Naive thymus-derived CD4-positive, alpha-beta T cell (primary cell): ENCODE measurements at regions of chr14 and their contacts with region 1.

Region 1: DNA sequence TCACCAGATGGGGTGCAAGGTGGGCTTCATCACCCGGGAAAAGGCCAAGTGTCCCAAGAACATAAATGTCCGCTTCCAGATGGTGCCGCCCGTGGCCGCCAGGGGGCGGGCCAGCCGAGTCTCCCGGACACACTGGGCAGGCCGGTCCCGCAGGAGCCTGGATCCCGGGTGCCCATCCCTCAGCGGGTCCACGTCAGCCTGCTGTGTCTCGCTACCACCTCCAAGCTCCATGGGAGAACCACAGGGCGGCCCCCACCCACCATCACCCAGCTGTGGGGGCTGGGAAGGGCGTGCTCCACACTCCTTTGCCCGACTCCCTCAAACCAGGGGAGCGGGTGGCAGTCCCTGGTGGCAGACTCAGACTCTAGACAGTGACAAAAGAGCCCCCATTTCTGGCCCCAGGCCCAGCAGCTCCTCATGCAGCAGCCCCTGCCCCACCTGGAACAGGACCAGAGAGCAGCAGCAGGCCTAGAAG is 22.0 kb upstream of the NUDT14 start:
- DNase-seq: peak in 6 of 9 donors; percentile 30 to 75 (median 58)
- ATAC-seq: peak; percentile 58
- H3K4me3 ChIP-seq: no peak overlapping the region
- H3K4me3 Mint-ChIP-seq: no peak overlapping the region
- H3K27ac ChIP-seq: no peak overlapping the region
- H3K27ac Mint-ChIP-seq: no peak overlapping the region
- H3K4me1 ChIP-seq: peaks cover 0 to 18% of the 10 kb centered on the region in 2 donors
- H3K4me1 Mint-ChIP-seq: peaks cover 9 to 15% (median 13%) of the 10 kb centered on the region in 7 donors
- H3K27me3 ChIP-seq: peaks cover 0 to 2% of the 10 kb centered on the region in 2 donors
- H3K27me3 Mint-ChIP-seq: peaks cover 6 to 26% (median 12%) of the 10 kb centered on the region in 5 donors

Region 2: DNA sequence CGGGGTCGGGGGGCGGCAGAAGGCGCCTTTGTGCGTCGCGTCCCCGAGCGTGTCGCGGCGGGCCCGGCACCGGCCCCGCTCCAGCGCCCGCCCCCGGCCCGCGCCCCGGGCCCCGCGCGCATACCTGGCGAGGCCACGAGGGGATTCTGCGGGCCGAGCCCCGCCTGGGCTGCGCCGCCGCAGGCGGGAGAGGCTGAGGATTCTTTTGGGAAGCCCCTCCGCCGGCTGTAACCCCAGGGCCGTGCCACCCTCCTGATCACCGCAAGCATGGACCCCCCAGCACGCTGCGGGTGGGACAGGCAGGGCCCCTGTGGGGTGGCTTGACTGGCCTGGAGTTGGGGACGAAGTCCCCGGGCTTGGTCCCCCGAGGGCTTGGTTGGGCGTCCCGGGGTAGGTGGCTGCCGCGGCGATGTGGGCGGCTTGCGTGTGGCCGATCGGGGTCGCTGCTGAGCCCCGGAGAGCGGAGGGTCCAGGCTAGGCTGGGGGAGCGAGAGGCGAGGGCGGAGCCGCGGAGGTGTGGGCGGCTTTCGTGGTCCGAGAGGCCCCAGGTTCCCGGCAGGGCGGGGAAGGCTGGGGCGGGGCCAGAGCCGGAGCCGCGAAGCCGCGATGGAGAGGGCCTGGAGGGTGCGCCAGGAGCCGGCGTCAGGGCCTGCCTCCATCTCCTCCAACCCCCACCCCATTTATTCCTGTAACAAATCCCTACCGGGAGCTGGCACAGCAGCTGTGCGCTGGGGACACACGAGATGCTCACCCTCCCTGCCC is 109.5 kb before region 1 on chr14:
- CTCF ChIA-PET with region 1: no interaction called
- POLR2A ChIA-PET with region 1: no interaction called
- intact Hi-C with region 1: loop called (anchors 2 to 5 kb)
- DNase-seq: peak in 7 of 9 donors; percentile 23 to 84 (median 31)
- ATAC-seq: peak; percentile 47
- H3K4me3 ChIP-seq: peak overlapping the region; percentile 67
- H3K4me3 Mint-ChIP-seq: peak overlapping the region; percentile 46 to 84 (median 72)
- H3K27ac ChIP-seq: peak overlapping the region; percentile 87
- H3K27ac Mint-ChIP-seq: peak overlapping the region in 6 of 9 donors; percentile 41 to 72 (median 60)
- H3K4me1 ChIP-seq: peaks cover 14 to 15% of the 10 kb centered on the region in 2 donors
- H3K4me1 Mint-ChIP-seq: peaks cover 5 to 22% (median 16%) of the 10 kb centered on the region in 7 donors
- H3K27me3 ChIP-seq: no peaks in the 10 kb centered on the region
- H3K27me3 Mint-ChIP-seq: peaks cover 0 to 4% (median 0%) of the 10 kb centered on the region in 5 donors

Region 3: GRCh38 chr14:105161964-105162668 is 41.0 kb before region 1 on chr14:
- CTCF ChIA-PET with region 1: no interaction called
- POLR2A ChIA-PET with region 1: no interaction called
- intact Hi-C with region 1: no loop called
- DNase-seq: no peak
- ATAC-seq: peak; percentile 57
- H3K4me3 ChIP-seq: no peak overlapping the region
- H3K4me3 Mint-ChIP-seq: no peak overlapping the region
- H3K27ac ChIP-seq: no peak overlapping the region
- H3K27ac Mint-ChIP-seq: no peak overlapping the region
- H3K4me1 ChIP-seq: no peaks in the 10 kb centered on the region
- H3K4me1 Mint-ChIP-seq: peaks cover 0 to 3% (median 0%) of the 10 kb centered on the region in 7 donors
- H3K27me3 ChIP-seq: no peaks in the 10 kb centered on the region
- H3K27me3 Mint-ChIP-seq: peaks cover 0 to 8% (median 3%) of the 10 kb centered on the region in 5 donors

Region 4: GRCh38 chr14:105223260-105223659 is 20.2 kb after region 1 on chr14:
- CTCF ChIA-PET with region 1: no interaction called
- POLR2A ChIA-PET with region 1: no interaction called
- intact Hi-C with region 1: no loop called
- DNase-seq: no peak
- ATAC-seq: no peak
- H3K4me3 ChIP-seq: no peak overlapping the region
- H3K4me3 Mint-ChIP-seq: no peak overlapping the region
- H3K27ac ChIP-seq: no peak overlapping the region
- H3K27ac Mint-ChIP-seq: peak overlapping the region in 1 of 9 donors; percentile 41
- H3K4me1 ChIP-seq: no peaks in the 10 kb centered on the region
- H3K4me1 Mint-ChIP-seq: peaks cover 0 to 4% (median 0%) of the 10 kb centered on the region in 7 donors
- H3K27me3 ChIP-seq: no peaks in the 10 kb centered on the region
- H3K27me3 Mint-ChIP-seq: no peaks in the 10 kb centered on the region

Region 5: GRCh38 chr14:105248368-105248756 is 45.3 kb after region 1 on chr14 and contains the start of gene BTBD6:
- CTCF ChIA-PET with region 1: no interaction called
- POLR2A ChIA-PET with region 1: no interaction called
- intact Hi-C with region 1: loop called in 1 of 2 experiments (anchors 1 kb)
- DNase-seq: peak; percentile 83 to 91 (median 88)
- ATAC-seq: peak; percentile 94
- H3K4me3 ChIP-seq: peak within 1 kb of the TSS; percentile 73
- H3K4me3 Mint-ChIP-seq: peak within 1 kb of the TSS; percentile 69 to 85 (median 80)
- H3K27ac ChIP-seq: peak within 1 kb of the TSS; percentile 79
- H3K27ac Mint-ChIP-seq: peak within 1 kb of the TSS in 8 of 9 donors; percentile 64 to 89 (median 82)
- H3K4me1 ChIP-seq: peaks cover 12 to 14% of the 10 kb centered on the region in 2 donors
- H3K4me1 Mint-ChIP-seq: peaks cover 17 to 52% (median 31%) of the 10 kb centered on the region in 7 donors
- H3K27me3 ChIP-seq: no peaks in the 10 kb centered on the region
- H3K27me3 Mint-ChIP-seq: no peaks in the 10 kb centered on the region
- total RNA-seq, gene BTBD6: 30.8 to 43.0 (median 40.1) TPM

Region 6: DNA sequence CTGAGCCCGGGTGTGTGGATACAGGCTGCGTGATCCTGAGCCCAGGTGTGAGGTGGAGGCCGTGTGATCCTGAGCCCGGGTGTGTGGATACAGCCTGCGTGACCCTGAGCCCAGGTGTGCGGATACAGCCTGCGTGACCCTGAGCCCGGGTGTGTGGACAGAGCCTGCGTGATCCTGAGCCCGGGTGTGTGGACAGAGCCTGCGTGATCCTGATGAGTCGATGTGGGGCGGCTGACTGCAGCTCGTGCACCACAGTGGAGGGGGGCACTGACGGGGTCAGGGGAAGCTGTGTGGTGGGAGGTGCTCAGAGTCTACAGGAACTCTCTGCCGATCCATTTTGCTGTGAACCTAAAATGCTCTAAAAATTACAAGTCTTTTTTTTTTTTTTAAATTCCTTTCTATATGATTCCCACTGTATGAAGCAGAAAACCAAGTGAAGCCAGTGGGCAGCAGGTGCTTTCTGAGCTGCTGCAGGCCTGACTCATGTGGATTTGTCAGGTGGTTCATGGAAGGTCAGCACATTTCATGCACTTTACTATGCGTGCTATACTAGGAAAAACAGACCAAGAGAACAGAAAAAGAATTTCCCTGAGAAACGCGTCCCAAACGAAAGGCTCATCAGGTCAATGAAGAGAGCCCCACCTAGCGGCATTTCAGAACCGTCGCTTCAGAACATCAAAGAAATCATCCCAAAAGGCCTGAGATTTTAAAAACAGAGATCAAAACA is 78.4 kb after region 1 on chr14:
- CTCF ChIA-PET with region 1: no interaction called
- POLR2A ChIA-PET with region 1: no interaction called
- intact Hi-C with region 1: loop called in 1 of 2 experiments (anchors 1 kb)
- DNase-seq: peak in 6 of 9 donors; percentile 10 to 41 (median 30)
- ATAC-seq: peak; percentile 26
- H3K4me3 ChIP-seq: no peak overlapping the region
- H3K4me3 Mint-ChIP-seq: peak overlapping the region in 2 of 10 donors; percentile 1 to 5
- H3K27ac ChIP-seq: no peak overlapping the region
- H3K27ac Mint-ChIP-seq: peak overlapping the region in 5 of 9 donors; percentile 5 to 74 (median 47)
- H3K4me1 ChIP-seq: peaks cover 0 to 12% of the 10 kb centered on the region in 2 donors
- H3K4me1 Mint-ChIP-seq: peaks cover 13 to 55% (median 46%) of the 10 kb centered on the region in 7 donors
- H3K27me3 ChIP-seq: no peaks in the 10 kb centered on the region
- H3K27me3 Mint-ChIP-seq: no peaks in the 10 kb centered on the region

Region 7: DNA sequence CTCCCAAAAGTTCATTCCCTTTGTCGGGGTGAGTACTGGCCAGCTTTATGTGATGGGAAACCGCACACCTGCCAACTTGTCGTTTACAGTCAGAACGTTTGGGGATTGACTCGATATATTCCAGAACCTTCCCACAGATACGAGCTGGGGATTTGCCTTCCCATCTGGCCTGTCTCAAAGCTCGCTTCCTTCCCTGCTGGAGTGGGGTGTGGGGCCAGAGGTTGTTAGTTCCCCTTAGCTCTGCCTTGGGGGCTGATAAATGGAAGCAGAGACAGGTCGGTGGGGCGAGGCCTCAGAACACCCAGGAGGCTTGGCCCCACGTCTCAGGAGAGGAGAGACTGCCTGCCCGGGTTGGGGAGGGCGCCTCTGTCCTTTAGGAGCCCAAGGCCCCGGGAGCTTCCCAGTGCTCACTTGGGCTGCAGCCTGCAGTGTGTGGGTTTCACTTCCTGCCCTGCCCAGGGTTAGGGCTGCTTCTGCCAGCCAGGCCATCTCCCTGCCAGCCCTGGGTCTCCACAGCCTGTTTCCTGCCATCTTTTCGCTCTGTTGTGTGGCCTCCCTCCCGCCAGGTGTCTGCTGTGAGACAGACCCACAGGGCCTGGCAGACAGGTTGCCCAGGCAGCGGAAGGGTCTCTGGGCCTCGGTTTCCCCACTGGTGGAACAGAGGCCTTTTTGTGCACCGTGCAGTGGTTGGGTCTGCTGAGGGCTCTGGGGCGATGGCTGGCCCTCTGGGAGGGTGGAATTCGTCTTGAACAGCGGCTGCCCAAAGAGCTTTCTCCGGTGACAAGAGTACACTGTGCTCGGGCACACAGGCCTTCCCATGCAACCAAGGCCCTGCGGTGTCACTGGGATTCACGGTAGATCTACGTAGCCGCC is 187.1 kb after region 1 on chr14:
- CTCF ChIA-PET with region 1: no interaction called
- POLR2A ChIA-PET with region 1: no interaction called
- intact Hi-C with region 1: no loop called
- DNase-seq: no peak
- ATAC-seq: peak; percentile 54
- H3K4me3 ChIP-seq: no peak overlapping the region
- H3K4me3 Mint-ChIP-seq: no peak overlapping the region
- H3K27ac ChIP-seq: no peak overlapping the region
- H3K27ac Mint-ChIP-seq: peak overlapping the region in 1 of 9 donors; percentile 46
- H3K4me1 ChIP-seq: no peaks in the 10 kb centered on the region
- H3K4me1 Mint-ChIP-seq: peaks cover 0 to 7% (median 4%) of the 10 kb centered on the region in 7 donors
- H3K27me3 ChIP-seq: no peaks in the 10 kb centered on the region
- H3K27me3 Mint-ChIP-seq: no peaks in the 10 kb centered on the region